PC-9 (cell line): ENCODE measurements at regions of chr4 and their contacts with region 1.

Region 1: DNA sequence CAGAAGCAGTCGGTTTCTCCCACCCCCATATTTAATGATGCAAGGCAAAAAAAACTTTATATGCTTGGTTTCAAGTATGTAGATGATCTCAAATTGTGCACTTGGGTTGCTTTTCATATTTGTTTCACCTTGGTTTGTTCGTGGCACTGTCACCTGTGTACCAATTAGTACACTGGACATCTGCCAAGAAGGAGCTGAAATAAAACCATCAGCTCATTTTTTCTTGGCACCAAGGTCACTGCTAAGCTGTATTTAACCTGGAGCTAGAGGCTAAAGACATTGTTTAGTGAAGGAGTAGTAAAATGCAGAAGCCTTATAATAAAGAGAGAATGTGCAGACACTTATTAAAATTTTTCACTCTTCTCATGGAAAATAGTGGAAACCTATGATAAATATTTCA is 430.8 kb downstream of the ARHGAP24 start:
- DNase-seq: no peak
- H3K4me3 ChIP-seq: no peak overlapping the region
- H3K27ac ChIP-seq: no peak overlapping the region
- H3K4me1 ChIP-seq: no peaks in the 10 kb centered on the region
- H3K27me3 ChIP-seq: no peaks in the 10 kb centered on the region
- CTCF ChIP-seq: no peak

Region 2: GRCh38 chr4:86055898-86056297 is 150.1 kb after region 1 on chr4:
- CTCF ChIA-PET with region 1: no interaction called
- POLR2A ChIA-PET with region 1: interaction called, 11 read pairs
- intact Hi-C with region 1: no loop called
- DNase-seq: no peak
- H3K4me3 ChIP-seq: no peak overlapping the region
- H3K27ac ChIP-seq: no peak overlapping the region
- H3K4me1 ChIP-seq: no peaks in the 10 kb centered on the region
- H3K27me3 ChIP-seq: no peaks in the 10 kb centered on the region
- CTCF ChIP-seq: no peak